Activated T-helper 1 cell treated with anti-CD3 and anti-CD28 coated beads, Interleukin-12 subunit alpha, Interleukin-12 subunit beta, Interleukin-2, Interleukin-4 antibody, amounts not matched to agents 30 ng/mL and 10 ng/mL and 1 ng/mL, durations not matched to agents 14 hours and 24 hours and 36 hours (primary cell): ENCODE measurements at regions of chr2 and their contacts with region 1.

Region 1: GRCh38 chr2:28610583-28611201 is 114.8 kb downstream of the PLB1 start:
- DNase-seq: no peak
- H3K4me3 Mint-ChIP-seq: peak overlapping the region; percentile 47
- H3K27ac Mint-ChIP-seq: peak overlapping the region; percentile 29
- H3K4me1 Mint-ChIP-seq: peaks cover 30% of the 10 kb centered on the region
- H3K27me3 Mint-ChIP-seq: no peaks in the 10 kb centered on the region

Region 2: DNA sequence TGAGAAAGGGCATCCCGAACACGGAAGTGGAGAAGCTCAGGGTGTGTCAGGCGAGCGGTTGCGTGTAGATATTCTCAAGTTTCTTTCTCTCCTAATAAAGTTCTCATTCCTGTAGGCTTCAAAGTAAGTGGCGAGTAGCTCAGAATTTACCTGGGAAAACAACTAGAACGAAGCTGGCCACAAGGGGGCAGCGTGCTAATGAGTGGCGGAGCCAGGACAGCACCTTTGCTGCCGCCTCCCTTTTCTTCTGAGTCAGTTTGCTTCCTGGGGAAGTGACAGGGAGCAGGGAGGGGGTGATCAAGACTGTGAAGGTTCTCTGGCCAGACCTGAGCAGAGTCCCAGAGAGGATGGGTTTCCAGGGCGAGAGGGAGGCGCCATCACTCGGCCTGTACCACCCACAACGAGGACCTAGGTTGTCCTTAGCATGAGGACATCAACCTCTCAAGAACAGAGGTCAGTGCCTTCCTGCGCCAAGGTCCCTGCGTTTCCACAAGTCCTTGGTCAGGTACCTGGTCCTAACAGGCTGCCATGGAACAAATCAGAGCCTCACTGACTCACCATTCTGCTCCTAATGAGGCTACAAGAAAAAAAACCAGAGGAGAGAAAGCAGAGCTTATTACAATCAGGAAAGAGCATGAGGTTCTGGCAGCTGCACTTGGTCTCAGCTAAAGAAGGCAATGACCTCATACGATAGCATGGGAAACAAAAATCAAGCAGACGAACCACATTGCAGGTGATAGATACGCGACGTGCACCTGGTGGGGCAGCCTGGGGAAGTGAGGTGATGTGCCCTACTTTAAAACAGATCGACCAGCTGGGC is 16.2 kb before region 1 on chr2:
- intact Hi-C with region 1: loop called (anchors 1 kb)
- DNase-seq: peak; percentile 71
- H3K4me3 Mint-ChIP-seq: peak overlapping the region; percentile 49
- H3K27ac Mint-ChIP-seq: peak overlapping the region; percentile 78
- H3K4me1 Mint-ChIP-seq: peaks cover 30% of the 10 kb centered on the region
- H3K27me3 Mint-ChIP-seq: peaks cover 4% of the 10 kb centered on the region

Region 3: DNA sequence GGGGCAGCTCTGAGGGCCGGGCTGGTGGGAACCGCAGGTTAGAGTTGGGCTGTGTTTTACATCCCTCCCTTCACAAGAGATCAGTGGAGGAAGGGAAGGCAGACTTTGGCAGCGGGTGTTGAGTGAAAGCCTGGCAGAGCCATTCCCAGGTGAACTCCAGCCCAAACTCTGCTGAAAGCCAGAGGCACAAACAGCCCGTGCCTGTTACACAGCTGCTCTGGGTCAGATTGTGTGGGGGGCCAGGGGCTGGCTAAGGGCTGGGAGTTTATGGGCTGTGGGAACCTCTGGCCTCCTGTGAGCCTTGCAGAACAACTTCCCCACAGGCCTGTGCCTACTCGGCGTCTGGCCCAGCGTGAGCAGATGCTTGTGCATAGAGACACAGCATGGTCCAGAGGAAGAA is 791.3 kb after region 1 on chr2:
- intact Hi-C with region 1: no loop called
- DNase-seq: no peak
- H3K4me3 Mint-ChIP-seq: no peak overlapping the region
- H3K27ac Mint-ChIP-seq: no peak overlapping the region
- H3K4me1 Mint-ChIP-seq: no peaks in the 10 kb centered on the region
- H3K27me3 Mint-ChIP-seq: peaks cover 11% of the 10 kb centered on the region